Motor neuron (in vitro differentiated cells): ENCODE measurements at regions of chr9 and their contacts with region 1.

Region 1: DNA sequence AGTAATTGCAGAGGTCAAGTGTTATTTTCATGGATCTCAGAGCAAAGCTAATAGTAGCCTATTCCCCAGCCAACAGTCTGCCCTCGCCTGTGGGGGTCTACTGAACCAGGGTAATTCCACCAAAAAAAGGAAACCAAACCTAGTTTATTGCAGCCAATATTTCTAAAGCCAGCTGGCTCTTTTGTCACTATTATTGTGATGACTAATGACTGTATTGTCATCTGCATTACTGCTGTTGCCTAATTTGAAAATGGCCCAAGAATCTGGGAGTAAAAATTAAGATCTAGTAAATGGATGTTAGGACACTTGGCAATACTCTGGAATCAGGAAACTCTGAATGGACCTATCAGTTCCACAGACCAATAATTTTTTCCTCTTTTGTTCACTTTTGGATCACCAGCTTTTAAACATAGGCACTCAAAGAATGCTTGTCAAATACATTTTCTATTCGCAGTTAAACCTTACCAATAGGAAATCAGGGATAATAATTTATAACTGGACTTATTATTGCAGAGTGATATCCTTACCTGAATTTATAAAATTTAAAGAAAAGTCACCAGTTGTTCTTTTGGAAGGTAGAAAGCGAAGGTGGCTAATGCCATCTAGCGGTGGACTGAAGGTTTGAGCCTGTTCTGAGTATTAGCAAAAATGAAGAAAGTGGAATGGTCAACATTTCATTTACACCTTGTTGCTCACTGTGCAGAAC is 69.2 kb downstream of the SYK start:
- ATAC-seq: peak in 6 of 8 experiments; percentile 8 to 46 (median 32)
- H3K4me3 ChIP-seq: no peak overlapping the region
- H3K27ac ChIP-seq: no peak overlapping the region
- H3K4me1 ChIP-seq: peaks cover 11 to 13% of the 10 kb centered on the region in 2 donors

Region 2: GRCh38 chr9:89597711-89598625 is 1272.8 kb before region 1 on chr9:
- in situ Hi-C with region 1: loop called in 4 of 9 experiments (anchors 25 kb)
- ATAC-seq: peak; percentile 30 to 68 (median 48)
- H3K4me3 ChIP-seq: no peak overlapping the region
- H3K27ac ChIP-seq: no peak overlapping the region
- H3K4me1 ChIP-seq: peaks cover 0 to 4% of the 10 kb centered on the region in 2 donors

Region 3: DNA sequence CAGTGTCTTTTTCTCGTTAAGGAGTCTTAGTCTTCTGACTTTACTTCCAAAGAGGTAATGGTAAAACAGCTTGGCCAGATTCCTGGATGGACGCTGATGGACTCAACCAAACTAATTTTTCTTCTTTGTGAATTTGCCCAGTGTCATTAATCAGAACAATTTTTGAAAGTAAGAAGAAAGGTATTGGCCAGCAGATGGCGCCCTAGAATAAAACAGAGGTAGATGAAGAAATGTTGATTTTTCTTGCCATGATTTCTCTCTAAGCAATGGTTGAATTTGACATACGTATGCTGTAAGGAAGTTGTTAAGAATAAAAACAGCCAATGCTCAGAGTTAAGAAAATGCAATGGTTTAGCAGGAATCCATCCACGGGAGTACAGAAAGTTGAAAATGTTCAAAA is 728.2 kb before region 1 on chr9:
- in situ Hi-C with region 1: loop called in 3 of 9 experiments (anchors 10 to 25 kb)
- ATAC-seq: no peak
- H3K4me3 ChIP-seq: no peak overlapping the region
- H3K27ac ChIP-seq: no peak overlapping the region
- H3K4me1 ChIP-seq: peaks cover 2 to 3% of the 10 kb centered on the region in 2 donors

Region 4: GRCh38 chr9:90219548-90220118 is 651.1 kb before region 1 on chr9:
- in situ Hi-C with region 1: loop called in 2 of 9 experiments (anchors 25 kb)
- ATAC-seq: peak in 1 of 8 experiments; percentile 55
- H3K4me3 ChIP-seq: no peak overlapping the region
- H3K27ac ChIP-seq: no peak overlapping the region
- H3K4me1 ChIP-seq: peaks cover 0 to 4% of the 10 kb centered on the region in 2 donors

Region 5: DNA sequence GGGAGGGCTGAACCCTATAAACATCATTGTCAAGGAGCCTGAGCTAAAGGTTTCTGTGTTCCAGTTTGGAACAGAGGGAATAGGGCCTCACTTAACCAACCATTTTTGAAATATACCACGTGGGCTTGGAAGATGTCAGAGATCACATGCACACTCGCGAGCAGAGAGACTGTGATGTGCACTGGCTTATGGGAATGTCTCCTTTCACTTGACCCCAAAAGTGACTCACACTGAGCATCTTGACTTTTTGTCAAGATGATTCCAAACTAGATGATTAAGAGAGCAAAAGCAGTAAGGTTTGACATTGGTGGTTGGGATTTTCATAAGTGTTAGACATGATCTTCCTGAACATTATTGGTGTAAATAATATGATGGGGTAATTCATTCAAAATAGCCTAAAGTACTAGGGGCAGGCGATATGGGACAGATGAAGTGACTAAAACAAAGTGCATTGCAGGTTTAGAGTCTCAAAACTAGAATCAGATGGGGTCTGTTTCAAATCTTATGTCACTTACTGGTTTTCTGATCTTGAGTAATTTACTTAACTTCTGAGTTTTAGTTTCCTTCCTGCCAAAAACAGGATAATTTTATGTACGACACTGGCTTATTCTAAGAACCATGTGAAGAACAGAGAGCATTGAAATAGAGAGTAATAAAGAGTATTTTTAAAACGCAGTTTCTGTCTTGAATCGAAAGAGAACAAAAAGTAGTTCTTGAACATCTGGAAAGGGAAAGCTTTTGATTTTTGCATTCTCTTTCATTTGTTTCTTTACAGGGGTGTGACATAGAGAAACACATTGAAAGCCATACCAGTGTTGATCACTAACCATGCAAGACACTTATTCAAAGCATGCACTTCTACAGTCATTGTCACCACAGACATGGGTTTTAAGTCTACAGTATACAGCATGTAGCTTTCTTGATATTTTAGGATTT is 611.2 kb before region 1 on chr9:
- in situ Hi-C with region 1: no loop called
- ATAC-seq: no peak
- H3K4me3 ChIP-seq: no peak overlapping the region
- H3K27ac ChIP-seq: no peak overlapping the region
- H3K4me1 ChIP-seq: no peaks in the 10 kb centered on the region

Region 6: DNA sequence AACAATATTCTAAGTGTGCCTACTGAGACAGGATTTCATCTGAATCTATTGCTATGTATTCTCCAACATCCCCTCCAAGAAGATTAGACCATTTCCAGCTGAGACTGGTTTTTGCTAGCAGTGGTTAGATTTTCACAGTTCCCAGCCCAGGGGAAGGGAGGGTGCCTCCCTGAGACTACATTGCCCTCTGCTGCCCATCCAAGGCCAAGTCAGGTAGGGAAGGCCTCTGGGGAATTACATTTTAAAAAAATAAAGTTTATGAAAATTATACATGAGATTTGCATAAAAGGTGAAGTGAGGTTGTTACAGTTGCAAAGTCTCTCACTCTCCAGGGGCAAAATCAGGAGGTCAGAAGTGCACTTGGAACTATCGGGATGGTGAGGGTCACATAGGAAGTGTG is 97.2 kb before region 1 on chr9:
- in situ Hi-C with region 1: loop called in 1 of 9 experiments (anchors 25 kb)
- ATAC-seq: peak; percentile 69 to 94 (median 78)
- H3K4me3 ChIP-seq: no peak overlapping the region
- H3K27ac ChIP-seq: no peak overlapping the region
- H3K4me1 ChIP-seq: peaks cover 2 to 10% of the 10 kb centered on the region in 2 donors